ENCODE measurements at regions of chr13 and their contacts with region 1.

Region 1: DNA sequence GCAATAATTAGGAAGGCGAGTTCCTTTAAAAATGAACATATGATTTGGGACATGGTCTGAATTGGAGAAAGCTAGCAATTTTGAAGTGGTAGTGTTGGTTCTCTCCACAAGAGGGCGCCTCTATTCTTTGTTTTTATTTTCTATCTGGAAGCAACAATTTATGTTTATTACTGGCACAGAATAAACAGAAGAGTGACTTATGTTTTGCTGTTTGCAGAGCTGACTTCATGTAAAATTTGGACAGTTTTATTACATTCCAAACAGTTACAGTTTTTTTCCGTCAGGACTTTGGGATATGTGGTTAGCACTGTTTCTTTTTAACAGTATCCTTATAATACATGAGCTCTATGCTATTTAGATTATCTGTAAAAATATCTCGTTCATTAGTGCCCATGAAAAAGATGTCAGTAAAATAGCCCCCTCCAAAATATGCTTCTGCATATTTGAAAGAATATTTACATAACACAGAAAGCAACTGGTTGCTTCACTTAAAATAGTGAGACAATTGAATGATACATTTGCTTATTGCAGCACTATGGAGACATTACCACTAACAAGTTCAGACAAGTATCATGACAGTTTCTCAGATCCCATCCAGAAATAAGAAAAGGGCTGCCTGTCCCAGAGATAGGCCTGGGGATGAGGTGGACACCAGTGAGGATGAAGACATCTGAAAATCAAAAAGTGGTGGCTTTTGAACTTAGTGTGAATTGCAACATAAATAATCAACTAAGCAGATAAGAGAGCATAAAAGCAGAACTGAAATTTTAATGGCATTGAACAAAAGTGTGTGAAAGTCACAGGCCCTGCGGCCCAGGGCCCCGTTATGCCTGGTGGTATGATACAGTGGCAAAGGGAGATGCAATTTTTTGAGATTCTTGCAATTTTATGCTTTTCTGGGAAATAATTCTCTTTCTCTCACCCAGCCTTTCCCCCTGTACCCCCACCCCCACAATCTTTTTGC is 32.3 kb upstream of the FGF9 start:
- DNase-seq: peak; percentile 13 to 34 (median 17)
- ATAC-seq: peak; percentile 51; the same call in 1 of the 3 replicates
- H3K4me3 ChIP-seq: no peak overlapping the region
- H3K27ac ChIP-seq: no peak overlapping the region
- H3K4me1 ChIP-seq: peaks cover 0 to 7% of the 10 kb centered on the region in 2 experiments; a peak in 4 of 5 replicates
- H3K27me3 ChIP-seq: peaks cover 2 to 12% of the 10 kb centered on the region in 2 experiments; a peak in 2 of 5 replicates
- CTCF ChIP-seq: peak; percentile 33 to 63 (median 52); a peak in 5 of 6 replicates
- EP300 ChIP-seq: no peak
- POLR2A ChIP-seq: no peak
- RAD21 ChIP-seq: peak in 1 of 2 experiments; percentile 64; a peak in 3 of 4 replicates

Region 2: DNA sequence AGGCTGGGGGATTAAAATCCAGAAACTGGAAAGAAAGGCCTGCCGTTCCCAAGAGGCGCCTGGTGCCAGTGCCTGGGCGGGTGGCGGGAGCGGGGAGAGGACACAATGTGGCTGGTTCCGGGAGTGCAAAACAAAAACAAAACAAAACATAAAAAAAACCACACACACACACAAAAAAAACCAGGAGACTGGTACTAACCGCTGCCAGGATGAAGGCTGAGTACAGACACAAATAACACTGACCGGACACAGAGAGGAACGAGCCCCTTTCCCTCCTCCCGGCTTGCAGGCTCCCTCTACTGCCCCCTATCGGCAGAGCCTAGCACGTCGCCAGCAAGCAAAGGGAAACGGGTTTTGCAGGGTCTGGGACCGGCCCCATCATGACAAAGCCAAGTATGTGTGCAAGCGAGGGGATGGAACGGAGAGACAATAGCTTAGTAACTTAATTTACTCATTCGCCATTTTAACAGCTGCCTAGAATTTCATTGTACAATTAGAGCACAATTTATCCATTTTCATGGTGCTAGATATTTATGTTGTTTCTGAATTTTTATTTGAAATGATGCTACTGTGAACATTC is 161.6 kb before region 1 on chr13:
- CTCF ChIA-PET with region 1: no interaction called
- POLR2A ChIA-PET with region 1: no interaction called
- in situ Hi-C with region 1: no loop called
- intact Hi-C with region 1: no loop called
- DNase-seq: peak; percentile 60 to 81 (median 66)
- ATAC-seq: peak; percentile 92
- H3K4me3 ChIP-seq: no peak overlapping the region
- H3K27ac ChIP-seq: no peak overlapping the region
- H3K4me1 ChIP-seq: no peaks in the 10 kb centered on the region
- H3K27me3 ChIP-seq: no peaks in the 10 kb centered on the region
- CTCF ChIP-seq: peak; percentile 77 to 86 (median 85)
- EP300 ChIP-seq: no peak
- POLR2A ChIP-seq: no peak
- RAD21 ChIP-seq: peak; percentile 35 to 69; a peak in 3 of 4 replicates

Region 3: DNA sequence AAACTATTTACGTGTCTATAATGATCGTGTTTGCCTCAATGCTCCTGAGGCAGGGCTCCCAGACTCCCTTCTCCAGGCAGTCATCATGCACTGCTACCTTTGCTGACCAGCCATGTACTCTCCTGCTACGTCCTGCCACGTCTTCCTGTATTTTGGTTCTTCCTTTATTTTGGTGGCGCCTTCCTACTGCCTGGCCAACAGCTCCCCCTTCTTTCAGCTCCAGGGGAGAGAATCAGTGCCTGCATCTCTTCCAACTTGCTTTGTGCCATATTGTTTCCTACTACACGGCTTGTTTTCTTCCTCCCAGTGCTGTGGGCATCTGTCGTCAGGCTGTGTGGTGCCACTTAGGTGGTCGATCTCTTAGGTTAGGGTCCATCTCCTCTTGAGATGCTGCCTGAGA is 128.4 kb after region 1 on chr13:
- CTCF ChIA-PET with region 1: no interaction called
- POLR2A ChIA-PET with region 1: no interaction called
- in situ Hi-C with region 1: no loop called
- intact Hi-C with region 1: loop called (anchors 10 kb)
- DNase-seq: no peak
- ATAC-seq: no peak
- H3K4me3 ChIP-seq: no peak overlapping the region
- H3K27ac ChIP-seq: no peak overlapping the region
- H3K4me1 ChIP-seq: no peaks in the 10 kb centered on the region
- H3K27me3 ChIP-seq: peaks cover 0 to 3% of the 10 kb centered on the region in 2 experiments; a peak in 1 of 5 replicates
- CTCF ChIP-seq: peak in 1 of 3 experiments; percentile 21; a peak in 2 of 6 replicates
- EP300 ChIP-seq: no peak
- POLR2A ChIP-seq: no peak
- RAD21 ChIP-seq: no peak

Region 4: DNA sequence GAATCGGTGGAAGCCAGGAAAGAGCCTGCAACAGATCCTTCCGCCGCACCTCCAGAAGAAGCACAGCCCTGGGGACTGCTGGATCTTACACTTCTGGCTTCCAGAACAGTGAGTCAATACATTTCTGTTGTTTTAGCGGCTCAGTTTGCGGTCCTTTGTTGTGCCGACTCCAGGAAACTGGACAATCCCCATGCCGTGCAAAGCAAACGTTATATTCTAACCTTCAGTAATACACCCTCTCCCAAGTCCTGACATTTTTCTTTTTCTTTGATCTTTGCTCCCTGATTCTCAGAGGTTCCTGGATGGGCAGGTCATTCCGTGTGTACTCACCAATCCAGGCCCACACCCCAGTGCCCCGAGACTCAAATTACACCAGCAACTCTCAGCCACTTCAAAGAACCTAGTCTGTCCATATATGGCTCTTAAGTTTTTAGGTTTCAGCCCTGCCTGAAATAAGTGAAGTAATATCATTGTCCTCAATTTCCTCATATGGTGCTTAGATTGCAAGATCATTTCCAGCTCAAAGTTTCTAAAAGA is 1155.1 kb after region 1 on chr13:
- CTCF ChIA-PET with region 1: no interaction called
- POLR2A ChIA-PET with region 1: no interaction called
- in situ Hi-C with region 1: loop called (anchors 25 kb)
- intact Hi-C with region 1: no loop called
- DNase-seq: no peak
- ATAC-seq: no peak
- H3K4me3 ChIP-seq: no peak overlapping the region
- H3K27ac ChIP-seq: no peak overlapping the region
- H3K4me1 ChIP-seq: no peaks in the 10 kb centered on the region
- H3K27me3 ChIP-seq: peaks cover 5 to 10% of the 10 kb centered on the region in 2 experiments; a peak in 3 of 5 replicates
- CTCF ChIP-seq: no peak
- EP300 ChIP-seq: no peak
- POLR2A ChIP-seq: no peak
- RAD21 ChIP-seq: no peak

Measured in K562 (cell line).